Activated T-helper 1 cell treated with anti-CD3 and anti-CD28 coated beads, Interleukin-12 subunit alpha, Interleukin-12 subunit beta, Interleukin-2, Interleukin-4 antibody, amounts not matched to agents 30 ng/mL and 10 ng/mL and 1 ng/mL, durations not matched to agents 14 hours and 24 hours and 36 hours (primary cell): ENCODE measurements at regions of chr4 and their contacts with region 1.

Region 1: GRCh38 chr4:113355550-113356371 is 306.3 kb downstream of the ANK2 start:
- DNase-seq: peak; percentile 71
- H3K4me3 Mint-ChIP-seq: peak overlapping the region; percentile 30
- H3K27ac Mint-ChIP-seq: peak overlapping the region; percentile 79
- H3K4me1 Mint-ChIP-seq: peaks cover 37% of the 10 kb centered on the region
- H3K27me3 Mint-ChIP-seq: peaks cover 25% of the 10 kb centered on the region

Region 2: GRCh38 chr4:113141901-113142346 is 213.8 kb before region 1 on chr4:
- intact Hi-C with region 1: loop called (anchors 1 kb)
- DNase-seq: no peak
- H3K4me3 Mint-ChIP-seq: no peak overlapping the region
- H3K27ac Mint-ChIP-seq: no peak overlapping the region
- H3K4me1 Mint-ChIP-seq: peaks cover 20% of the 10 kb centered on the region
- H3K27me3 Mint-ChIP-seq: peaks cover 9% of the 10 kb centered on the region

Region 3: DNA sequence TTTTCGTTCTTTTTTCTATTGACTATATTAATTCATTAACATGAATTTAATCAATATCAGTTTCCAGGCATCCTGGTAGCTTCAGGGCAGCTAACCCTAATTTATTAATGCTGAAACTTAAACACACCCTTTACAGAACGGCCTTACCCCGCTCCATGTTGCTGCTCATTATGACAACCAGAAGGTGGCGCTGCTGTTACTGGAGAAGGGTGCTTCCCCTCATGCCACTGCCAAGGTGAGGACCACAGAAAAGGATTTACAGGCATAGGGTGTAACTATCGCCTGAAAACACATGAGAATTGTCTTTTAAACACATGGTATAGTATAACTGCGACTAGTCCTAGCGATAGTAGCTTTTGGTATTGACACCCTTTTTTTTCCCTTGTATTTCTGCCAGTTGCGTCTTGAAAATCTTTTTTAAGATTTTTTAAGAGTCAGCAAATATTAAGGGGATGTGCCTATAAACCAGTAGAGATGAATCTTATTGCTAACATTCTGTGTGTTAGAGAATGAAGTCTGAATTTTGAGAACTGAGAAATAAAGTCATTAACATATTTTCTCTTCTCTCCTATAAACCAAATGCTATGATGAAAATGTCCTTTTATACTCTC is 77.3 kb before region 1 on chr4:
- intact Hi-C with region 1: loop called (anchors 1 kb)
- DNase-seq: peak; percentile 31
- H3K4me3 Mint-ChIP-seq: no peak overlapping the region
- H3K27ac Mint-ChIP-seq: no peak overlapping the region
- H3K4me1 Mint-ChIP-seq: no peaks in the 10 kb centered on the region
- H3K27me3 Mint-ChIP-seq: peaks cover 6% of the 10 kb centered on the region

Region 4: DNA sequence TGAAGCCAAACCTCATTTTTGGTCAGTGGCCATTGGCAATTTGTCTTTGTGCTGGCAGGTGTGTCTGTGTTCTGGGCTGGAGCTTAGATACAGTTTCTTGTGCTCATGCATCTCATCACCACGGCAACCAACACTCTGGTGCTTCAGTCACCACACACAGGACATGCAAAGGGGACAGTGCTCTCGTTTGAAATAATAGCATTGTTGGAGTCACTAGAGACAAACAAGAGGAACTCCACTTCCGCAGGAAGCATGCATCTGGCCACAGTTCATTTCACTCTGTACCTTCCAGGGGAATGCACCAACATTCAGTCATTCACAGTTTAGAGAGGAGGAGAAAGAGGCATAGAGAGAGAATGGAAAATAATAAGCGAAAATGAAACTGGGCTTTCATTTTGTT is 38.9 kb before region 1 on chr4:
- intact Hi-C with region 1: loop called (anchors 5 kb)
- DNase-seq: peak; percentile 8
- H3K4me3 Mint-ChIP-seq: no peak overlapping the region
- H3K27ac Mint-ChIP-seq: no peak overlapping the region
- H3K4me1 Mint-ChIP-seq: peaks cover 11% of the 10 kb centered on the region
- H3K27me3 Mint-ChIP-seq: peaks cover 8% of the 10 kb centered on the region

Region 5: GRCh38 chr4:113327494-113327893 is 28.3 kb before region 1 on chr4:
- intact Hi-C with region 1: loop called (anchors 2 kb)
- DNase-seq: no peak
- H3K4me3 Mint-ChIP-seq: no peak overlapping the region
- H3K27ac Mint-ChIP-seq: no peak overlapping the region
- H3K4me1 Mint-ChIP-seq: no peaks in the 10 kb centered on the region
- H3K27me3 Mint-ChIP-seq: peaks cover 25% of the 10 kb centered on the region

Region 6: DNA sequence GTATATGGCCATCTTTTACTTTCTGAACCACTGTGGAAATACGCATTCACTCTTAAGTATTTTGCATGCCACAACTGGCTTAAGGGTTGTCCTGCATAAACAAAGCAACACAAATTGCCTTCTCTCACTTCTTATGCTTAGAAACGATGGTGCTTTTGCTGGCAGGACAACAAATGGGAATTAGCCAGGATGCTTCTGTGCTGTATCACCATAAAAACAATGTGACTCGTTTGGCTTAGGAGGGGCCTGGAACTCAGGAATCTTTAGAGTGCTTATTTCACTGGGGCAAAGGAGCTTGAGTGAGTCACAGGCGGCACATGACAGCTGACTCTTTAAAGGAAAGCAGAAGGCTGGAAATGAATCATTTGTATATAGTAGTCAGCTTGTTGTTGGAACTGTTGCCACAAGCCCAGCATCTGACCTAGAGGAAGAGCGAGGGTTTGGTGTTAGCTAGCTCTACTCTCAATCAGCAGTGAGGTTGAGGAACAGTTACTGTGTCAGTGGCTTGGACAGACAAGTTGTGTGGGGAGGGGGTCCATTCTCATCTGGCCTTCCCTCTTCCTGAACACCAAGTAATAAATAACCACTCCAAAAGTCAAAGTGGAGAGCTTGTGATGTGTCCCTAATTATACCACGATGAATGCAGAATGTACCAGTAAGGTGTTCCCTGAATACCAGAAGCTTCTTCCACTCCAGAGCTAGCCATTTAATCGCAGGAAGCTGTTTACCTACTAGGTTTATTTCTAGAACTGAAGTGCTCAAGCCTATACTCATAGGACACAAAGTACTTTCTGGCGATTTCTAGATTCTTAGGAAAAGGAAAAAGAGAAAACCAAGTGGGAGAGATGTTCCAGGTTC is 112.6 kb after region 1 on chr4:
- intact Hi-C with region 1: loop called (anchors 5 kb)
- DNase-seq: no peak
- H3K4me3 Mint-ChIP-seq: no peak overlapping the region
- H3K27ac Mint-ChIP-seq: peak overlapping the region; percentile 89
- H3K4me1 Mint-ChIP-seq: peaks cover 28% of the 10 kb centered on the region
- H3K27me3 Mint-ChIP-seq: no peaks in the 10 kb centered on the region

Region 7: GRCh38 chr4:113823291-113823659 is 467.5 kb after region 1 on chr4:
- intact Hi-C with region 1: loop called (anchors 5 kb)
- DNase-seq: no peak
- H3K4me3 Mint-ChIP-seq: no peak overlapping the region
- H3K27ac Mint-ChIP-seq: no peak overlapping the region
- H3K4me1 Mint-ChIP-seq: peaks cover 38% of the 10 kb centered on the region
- H3K27me3 Mint-ChIP-seq: no peaks in the 10 kb centered on the region